RWPE1 (cell line): ENCODE measurements at regions of chr11 and their contacts with region 1.

Region 1: DNA sequence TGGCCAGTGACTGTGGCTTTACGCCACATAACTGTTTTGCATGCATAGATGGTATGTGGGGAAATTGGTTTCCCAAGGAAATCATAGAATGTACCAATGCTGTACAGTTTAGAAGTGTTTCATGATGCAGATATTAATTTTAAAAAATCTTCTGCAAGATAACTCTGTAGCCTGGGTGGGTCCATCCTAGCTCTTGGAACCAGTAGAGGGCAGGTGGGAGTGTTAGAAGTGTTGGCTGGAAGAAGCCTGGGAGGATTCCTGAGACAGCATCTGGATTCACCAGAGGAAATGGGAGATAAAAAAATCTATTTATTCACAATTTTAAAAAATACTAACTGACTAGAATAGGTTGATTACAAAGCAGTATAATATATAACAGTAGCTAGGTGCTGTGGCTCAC is 139.9 kb upstream of the GRIA4 start:
- DNase-seq: no peak
- H3K27ac ChIP-seq: no peak overlapping the region
- CTCF ChIP-seq: no peak

Region 2: GRCh38 chr11:105372206-105372605 is 97.7 kb before region 1 on chr11:
- CTCF ChIA-PET with region 1: no interaction called
- POLR2A ChIA-PET with region 1: interaction called, 13 read pairs
- DNase-seq: no peak
- H3K27ac ChIP-seq: no peak overlapping the region
- CTCF ChIP-seq: no peak